ENCODE measurements at regions of chr14 and their contacts with region 1.

Region 1: GRCh38 chr14:21257394-21257909 is 11.8 kb downstream of the HNRNPC start:
- DNase-seq: no peak
- ATAC-seq: no peak
- H3K4me3 ChIP-seq: no peak overlapping the region
- H3K4me3 Mint-ChIP-seq: peak overlapping the region; percentile 51
- H3K27ac ChIP-seq: peak overlapping the region in 1 of 2 donors; percentile 44
- H3K27ac Mint-ChIP-seq: peak overlapping the region; percentile 62
- H3K4me1 ChIP-seq: peaks cover 25 to 32% of the 10 kb centered on the region in 2 donors
- H3K4me1 Mint-ChIP-seq: peaks cover 60% of the 10 kb centered on the region
- H3K27me3 ChIP-seq: no peaks in the 10 kb centered on the region
- H3K27me3 Mint-ChIP-seq: no peaks in the 10 kb centered on the region
- CTCF ChIP-seq: no peak

Region 2: GRCh38 chr14:21215130-21215878 is 42.1 kb before region 1 on chr14:
- CTCF ChIA-PET with region 1: no interaction called
- POLR2A ChIA-PET with region 1: no interaction called
- intact Hi-C with region 1: no loop called
- DNase-seq: no peak
- ATAC-seq: no peak
- H3K4me3 ChIP-seq: no peak overlapping the region
- H3K4me3 Mint-ChIP-seq: peak overlapping the region; percentile 16
- H3K27ac ChIP-seq: peak overlapping the region in 1 of 2 donors; percentile 47
- H3K27ac Mint-ChIP-seq: peak overlapping the region; percentile 20
- H3K4me1 ChIP-seq: peaks cover 14 to 18% of the 10 kb centered on the region in 2 donors
- H3K4me1 Mint-ChIP-seq: peaks cover 39% of the 10 kb centered on the region
- H3K27me3 ChIP-seq: no peaks in the 10 kb centered on the region
- H3K27me3 Mint-ChIP-seq: no peaks in the 10 kb centered on the region
- CTCF ChIP-seq: no peak

Region 3: DNA sequence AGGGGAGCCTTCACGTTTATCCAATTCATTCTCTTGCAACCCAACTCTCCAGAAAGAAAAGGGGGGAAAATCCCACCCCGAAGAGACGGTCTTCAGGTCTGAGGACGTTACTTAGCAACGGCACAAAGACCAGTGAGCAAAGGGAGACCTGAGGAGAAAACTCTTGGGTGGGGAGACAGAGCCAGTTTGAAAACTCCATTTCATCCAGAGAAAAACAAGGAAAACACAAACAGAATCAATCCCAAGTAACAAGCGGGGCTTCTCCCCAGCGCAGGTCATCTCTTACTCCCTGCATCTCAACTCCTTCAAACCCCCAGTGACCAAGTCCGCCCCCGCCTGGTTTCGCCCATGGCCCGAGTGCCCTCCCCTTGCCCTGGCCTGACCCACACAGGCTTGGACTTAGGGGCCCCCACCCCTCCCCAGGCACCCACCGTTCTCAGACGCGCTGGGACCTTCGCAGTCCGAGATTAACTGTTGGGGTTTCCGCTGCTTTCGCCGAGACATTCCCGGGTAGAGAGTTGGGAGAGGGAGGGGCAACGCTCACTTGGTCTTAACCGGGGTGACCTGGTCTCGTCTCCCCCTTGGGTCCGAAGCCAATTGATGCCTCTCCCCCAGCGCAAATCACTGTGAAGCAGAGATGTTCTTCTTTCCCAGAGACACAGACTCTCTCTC is 279.1 kb after region 1 on chr14:
- CTCF ChIA-PET with region 1: no interaction called
- POLR2A ChIA-PET with region 1: interaction called, 10 read pairs
- intact Hi-C with region 1: no loop called
- DNase-seq: no peak
- ATAC-seq: no peak
- H3K4me3 ChIP-seq: no peak overlapping the region
- H3K4me3 Mint-ChIP-seq: peak overlapping the region; percentile 30
- H3K27ac ChIP-seq: no peak overlapping the region
- H3K27ac Mint-ChIP-seq: no peak overlapping the region
- H3K4me1 ChIP-seq: peaks cover 8 to 10% of the 10 kb centered on the region in 2 donors
- H3K4me1 Mint-ChIP-seq: peaks cover 12% of the 10 kb centered on the region
- H3K27me3 ChIP-seq: peaks cover 0 to 41% (median 34%) of the 10 kb centered on the region in 4 experiments
- H3K27me3 Mint-ChIP-seq: peaks cover 63% of the 10 kb centered on the region
- CTCF ChIP-seq: no peak

Measured in B cell (primary cell).